ENCODE measurements at regions of chr11 and their contacts with region 1.

Region 1: GRCh38 chr11:27234043-27234668 is 128.9 kb downstream of the CCDC34 start:
- DNase-seq: peak; percentile 23
- ATAC-seq: peak; percentile 93
- H3K4me3 Mint-ChIP-seq: peak overlapping the region; percentile 15
- H3K27ac Mint-ChIP-seq: peak overlapping the region; percentile 69
- H3K4me1 Mint-ChIP-seq: peaks cover 15% of the 10 kb centered on the region
- H3K27me3 Mint-ChIP-seq: no peaks in the 10 kb centered on the region
- CTCF ChIP-seq: no peak

Region 2: DNA sequence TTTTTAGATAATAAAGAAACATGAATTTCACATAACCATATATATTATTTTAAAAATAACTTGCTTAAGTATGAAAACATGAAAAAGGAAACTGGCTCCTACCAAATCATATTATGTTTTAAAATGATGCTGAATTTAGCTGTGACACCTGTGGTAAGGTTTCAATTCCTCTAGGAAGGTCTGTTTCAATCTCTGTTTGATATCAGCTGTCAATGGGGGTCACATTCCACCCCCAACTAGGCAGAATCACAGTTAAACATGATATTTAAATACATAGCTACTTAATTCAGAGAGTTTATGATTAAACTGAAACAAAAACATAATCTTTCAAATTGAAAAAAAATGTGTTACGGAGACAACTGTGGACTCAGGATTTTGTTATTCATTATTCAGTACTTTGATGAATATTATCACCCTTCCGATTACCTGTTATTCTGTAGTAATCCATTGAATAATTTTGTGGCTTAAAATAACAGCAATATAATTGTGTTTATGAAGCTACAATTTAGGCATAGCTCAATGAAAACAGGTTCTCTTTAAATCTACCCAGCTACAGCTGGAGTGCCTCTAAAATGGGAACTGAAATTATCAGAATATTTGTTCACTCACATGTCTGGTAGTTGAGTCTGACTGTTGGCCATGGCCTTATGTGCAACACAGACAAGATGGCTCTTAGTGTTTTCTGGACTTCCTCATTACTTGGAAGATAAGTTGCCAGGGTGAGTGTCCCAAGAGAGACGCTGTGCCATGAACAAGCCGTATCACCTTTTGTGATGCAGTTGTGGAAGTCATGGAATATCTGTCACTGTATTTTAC is 1146.8 kb before region 1 on chr11:
- CTCF ChIA-PET with region 1: no interaction called
- POLR2A ChIA-PET with region 1: no interaction called
- intact Hi-C with region 1: loop called (anchors 10 kb)
- DNase-seq: no peak
- ATAC-seq: peak; percentile 95
- H3K4me3 Mint-ChIP-seq: peak overlapping the region; percentile 65
- H3K27ac Mint-ChIP-seq: peak overlapping the region; percentile 86
- H3K4me1 Mint-ChIP-seq: peaks cover 54% of the 10 kb centered on the region
- H3K27me3 Mint-ChIP-seq: no peaks in the 10 kb centered on the region
- CTCF ChIP-seq: no peak

Region 3: GRCh38 chr11:26792941-26793340 is 441.2 kb before region 1 on chr11:
- CTCF ChIA-PET with region 1: no interaction called
- POLR2A ChIA-PET with region 1: no interaction called
- intact Hi-C with region 1: no loop called
- DNase-seq: no peak
- ATAC-seq: no peak
- H3K4me3 Mint-ChIP-seq: no peak overlapping the region
- H3K27ac Mint-ChIP-seq: no peak overlapping the region
- H3K4me1 Mint-ChIP-seq: no peaks in the 10 kb centered on the region
- H3K27me3 Mint-ChIP-seq: no peaks in the 10 kb centered on the region
- CTCF ChIP-seq: no peak

Region 4: DNA sequence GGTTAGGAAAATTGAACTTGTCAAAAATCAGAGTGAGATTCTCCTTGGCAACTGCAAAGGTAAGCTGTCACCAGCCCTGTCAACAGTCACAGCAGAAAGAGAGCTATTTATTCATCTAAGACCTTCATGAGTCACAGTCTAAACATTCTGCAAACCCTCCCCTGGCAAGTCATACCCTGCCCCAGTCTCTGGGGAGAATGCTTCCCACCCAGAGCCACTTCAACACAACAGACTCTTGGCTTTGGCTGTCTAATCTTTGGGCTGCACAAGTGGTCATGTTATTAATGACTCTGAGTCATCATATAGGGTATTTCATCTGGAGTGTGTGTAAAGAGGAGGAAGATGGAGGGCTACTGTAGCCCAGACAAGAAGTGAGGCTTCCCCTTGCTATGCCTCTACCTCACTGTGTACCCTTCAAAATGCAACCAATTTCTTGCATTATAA is 24.6 kb before region 1 on chr11:
- CTCF ChIA-PET with region 1: no interaction called
- POLR2A ChIA-PET with region 1: interaction called, 7 read pairs
- intact Hi-C with region 1: loop called (anchors 2 kb)
- DNase-seq: no peak
- ATAC-seq: peak; percentile 64
- H3K4me3 Mint-ChIP-seq: no peak overlapping the region
- H3K27ac Mint-ChIP-seq: no peak overlapping the region
- H3K4me1 Mint-ChIP-seq: no peaks in the 10 kb centered on the region
- H3K27me3 Mint-ChIP-seq: peaks cover 4% of the 10 kb centered on the region
- CTCF ChIP-seq: no peak

Region 5: GRCh38 chr11:27362749-27363575 is 128.8 kb after region 1 on chr11 and contains the start of gene CCDC34:
- CTCF ChIA-PET with region 1: no interaction called
- POLR2A ChIA-PET with region 1: no interaction called
- intact Hi-C with region 1: loop called (anchors 1 kb)
- DNase-seq: peak; percentile 84
- ATAC-seq: peak; percentile 99
- H3K4me3 Mint-ChIP-seq: peak within 1 kb of the TSS; percentile 95
- H3K27ac Mint-ChIP-seq: peak within 1 kb of the TSS; percentile 64
- H3K4me1 Mint-ChIP-seq: peaks cover 20% of the 10 kb centered on the region
- H3K27me3 Mint-ChIP-seq: no peaks in the 10 kb centered on the region
- CTCF ChIP-seq: no peak
- total RNA-seq, gene CCDC34: 2.4 and 3.7 TPM in 2 replicates

Region 6: DNA sequence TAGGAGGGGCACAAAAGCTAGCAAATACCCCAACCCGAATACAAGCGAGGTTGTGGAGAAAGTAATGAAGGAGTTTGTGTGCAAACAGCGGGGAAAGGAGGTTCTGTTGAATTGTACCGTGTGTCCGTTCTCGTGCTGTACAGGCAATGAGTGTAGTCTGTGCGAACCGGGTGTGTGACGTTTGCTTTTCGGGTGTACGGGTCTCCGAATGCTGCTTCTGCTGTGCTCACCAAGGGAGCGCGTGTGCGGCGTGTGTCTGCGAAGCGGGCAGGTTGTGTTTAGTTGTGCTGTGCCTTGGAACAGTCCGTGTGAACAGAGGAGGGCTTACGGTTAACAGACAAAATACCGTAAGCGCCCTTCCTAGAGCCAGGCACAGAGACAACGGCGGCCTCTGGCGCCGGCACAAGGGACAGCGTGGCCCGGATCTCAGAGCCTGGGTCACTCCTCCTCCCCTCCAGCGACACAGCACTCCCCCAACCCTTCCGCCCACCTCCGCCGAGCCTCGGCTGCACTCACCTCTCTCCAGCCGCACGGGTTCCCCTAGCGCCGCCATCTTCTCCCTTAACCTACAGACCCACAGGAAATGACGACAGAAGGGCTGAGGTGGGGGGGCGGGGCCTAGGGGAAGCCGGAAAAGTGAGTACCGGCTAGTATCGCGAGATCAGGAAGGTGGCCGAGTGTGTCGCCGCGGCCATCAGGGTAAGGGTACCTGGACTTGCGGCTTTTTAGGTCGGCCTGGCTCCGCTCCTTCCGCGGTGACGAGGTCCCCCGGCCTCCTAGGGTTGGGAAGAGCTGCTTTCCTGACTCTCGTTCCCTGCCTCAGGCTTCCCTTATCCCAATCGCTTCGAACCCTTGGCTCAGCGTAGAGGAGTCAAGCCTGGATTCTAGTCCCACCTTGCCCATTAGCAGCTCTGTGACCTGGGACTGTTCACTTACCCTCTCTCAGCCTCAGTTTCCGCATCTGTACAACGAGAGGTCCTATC is 272.3 kb after region 1 on chr11 and contains the start of gene LIN7C:
- CTCF ChIA-PET with region 1: no interaction called
- POLR2A ChIA-PET with region 1: no interaction called
- intact Hi-C with region 1: loop called (anchors 5 kb)
- DNase-seq: peak; percentile 72
- ATAC-seq: peak; percentile 93
- H3K4me3 Mint-ChIP-seq: peak within 1 kb of the TSS; percentile 100
- H3K27ac Mint-ChIP-seq: peak within 1 kb of the TSS; percentile 98
- H3K4me1 Mint-ChIP-seq: peaks cover 45% of the 10 kb centered on the region
- H3K27me3 Mint-ChIP-seq: no peaks in the 10 kb centered on the region
- CTCF ChIP-seq: no peak
- total RNA-seq, gene LIN7C: 20.8 and 23.5 TPM in 2 replicates

Region 7: GRCh38 chr11:27618281-27618915 is 384.2 kb after region 1 on chr11:
- CTCF ChIA-PET with region 1: no interaction called
- POLR2A ChIA-PET with region 1: no interaction called
- intact Hi-C with region 1: no loop called
- DNase-seq: no peak
- ATAC-seq: no peak
- H3K4me3 Mint-ChIP-seq: no peak overlapping the region
- H3K27ac Mint-ChIP-seq: no peak overlapping the region
- H3K4me1 Mint-ChIP-seq: no peaks in the 10 kb centered on the region
- H3K27me3 Mint-ChIP-seq: no peaks in the 10 kb centered on the region
- CTCF ChIP-seq: no peak

Measured in activated B cell treated with CpG ODN at 0.5 μM for 24 hours (primary cell).